ENCODE measurements at regions of chr1 and their contacts with region 1.

Region 1: DNA sequence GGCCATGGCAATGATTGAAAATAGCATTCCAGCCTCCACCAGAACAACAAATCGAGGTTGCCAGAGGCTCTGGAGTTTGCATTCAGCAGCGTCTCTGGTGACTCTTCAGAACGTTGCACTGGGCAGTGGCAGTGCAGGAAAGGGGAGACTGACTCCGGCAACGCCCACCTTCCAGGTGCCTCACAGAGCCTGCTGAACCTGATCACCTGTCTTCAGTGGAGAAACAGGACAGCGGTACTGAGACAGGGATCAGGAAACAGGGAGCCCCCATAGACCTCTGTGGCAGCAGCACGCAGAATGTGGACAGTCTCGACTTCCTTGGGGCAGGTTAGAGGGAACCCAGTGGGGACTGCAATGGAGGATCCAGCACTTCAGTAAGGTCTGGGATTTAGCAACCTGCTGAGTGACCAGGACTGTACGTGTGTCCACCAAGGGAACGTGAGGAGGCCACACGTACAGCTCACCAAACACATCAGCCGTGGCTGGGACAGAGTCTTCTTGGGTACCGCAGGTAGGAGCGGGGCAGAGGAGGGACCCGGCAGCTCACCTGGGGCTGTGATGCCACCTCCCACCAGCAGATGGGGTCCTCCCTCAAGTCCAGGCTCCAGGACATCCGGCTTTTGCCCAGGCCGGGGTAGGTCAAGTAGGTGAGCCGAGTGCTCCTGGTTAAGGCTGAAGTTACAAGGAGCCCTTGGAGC is 128.6 kb downstream of the PRDM2 start:
- DNase-seq: peak in 3 of 4 donors; percentile 39 to 85 (median 75)
- ATAC-seq: peak; percentile 87
- H3K4me3 ChIP-seq: no peak overlapping the region
- H3K27ac ChIP-seq: no peak overlapping the region
- H3K4me1 ChIP-seq: peaks cover 0 to 3% of the 10 kb centered on the region in 2 donors
- H3K27me3 ChIP-seq: peaks cover 0 to 3% of the 10 kb centered on the region in 2 donors
- CTCF ChIP-seq: peak; percentile 42 to 53

Region 2: DNA sequence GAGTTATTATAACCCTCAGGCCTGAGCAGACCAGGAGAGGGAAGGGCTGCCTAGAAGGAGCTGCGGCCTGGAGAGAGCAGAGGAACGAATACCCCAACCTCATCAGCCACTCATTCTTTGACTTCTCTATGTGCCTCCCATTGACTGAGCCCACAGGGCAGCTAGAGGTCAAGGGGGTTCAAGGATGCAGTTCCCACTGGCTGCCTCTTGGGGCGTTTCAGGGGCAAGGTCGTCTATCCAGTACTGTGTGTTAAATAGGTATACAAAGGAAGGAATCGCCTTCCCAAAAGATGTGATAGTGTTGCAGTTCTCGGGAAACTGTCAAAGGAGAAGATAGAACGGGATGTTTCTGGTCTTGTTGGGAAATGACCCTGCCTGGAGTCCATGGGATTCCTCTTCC is 122.0 kb after region 1 on chr1:
- intact Hi-C with region 1: loop called in 1 of 2 experiments (anchors 10 kb)
- DNase-seq: no peak
- ATAC-seq: no peak
- H3K4me3 ChIP-seq: no peak overlapping the region
- H3K27ac ChIP-seq: no peak overlapping the region
- H3K4me1 ChIP-seq: no peaks in the 10 kb centered on the region
- H3K27me3 ChIP-seq: no peaks in the 10 kb centered on the region
- CTCF ChIP-seq: no peak